ENCODE measurements at regions of chr1 and their contacts with region 1.

Region 1: DNA sequence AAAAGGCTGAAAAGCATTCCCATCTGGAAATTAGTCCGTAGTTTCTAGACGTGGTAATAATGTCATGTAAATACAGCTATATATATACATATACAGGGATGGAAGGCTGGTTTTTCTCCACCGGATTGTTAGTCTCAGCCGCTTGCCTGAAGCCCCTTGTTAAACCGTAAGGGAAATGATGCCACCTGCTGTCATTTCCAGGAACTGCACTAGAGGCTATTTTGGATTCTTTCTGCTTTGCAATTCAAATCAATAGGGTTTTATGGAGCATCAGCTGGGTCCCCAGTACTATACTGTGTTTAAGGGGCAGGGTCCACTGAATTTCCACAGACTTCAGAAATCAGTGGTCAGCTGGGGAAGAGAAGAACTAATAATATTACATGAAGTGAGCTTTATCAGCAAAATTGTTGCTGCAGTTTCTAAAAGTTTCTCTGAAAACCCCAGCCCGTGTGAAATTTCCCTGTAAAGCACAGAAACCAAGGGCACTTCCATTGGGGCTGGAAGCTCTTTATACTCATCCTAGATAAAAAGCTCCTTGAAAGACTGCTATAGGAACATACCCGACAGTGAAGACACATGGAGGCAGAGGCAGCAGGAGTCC is 33.8 kb upstream of the MPZL1 start:
- DNase-seq: no peak
- ATAC-seq: peak; percentile 78
- H3K4me3 ChIP-seq: no peak overlapping the region
- H3K27ac ChIP-seq: no peak overlapping the region
- H3K4me1 ChIP-seq: peaks cover 7% of the 10 kb centered on the region
- H3K27me3 ChIP-seq: no peaks in the 10 kb centered on the region
- CTCF ChIP-seq: peak; percentile 94

Region 2: DNA sequence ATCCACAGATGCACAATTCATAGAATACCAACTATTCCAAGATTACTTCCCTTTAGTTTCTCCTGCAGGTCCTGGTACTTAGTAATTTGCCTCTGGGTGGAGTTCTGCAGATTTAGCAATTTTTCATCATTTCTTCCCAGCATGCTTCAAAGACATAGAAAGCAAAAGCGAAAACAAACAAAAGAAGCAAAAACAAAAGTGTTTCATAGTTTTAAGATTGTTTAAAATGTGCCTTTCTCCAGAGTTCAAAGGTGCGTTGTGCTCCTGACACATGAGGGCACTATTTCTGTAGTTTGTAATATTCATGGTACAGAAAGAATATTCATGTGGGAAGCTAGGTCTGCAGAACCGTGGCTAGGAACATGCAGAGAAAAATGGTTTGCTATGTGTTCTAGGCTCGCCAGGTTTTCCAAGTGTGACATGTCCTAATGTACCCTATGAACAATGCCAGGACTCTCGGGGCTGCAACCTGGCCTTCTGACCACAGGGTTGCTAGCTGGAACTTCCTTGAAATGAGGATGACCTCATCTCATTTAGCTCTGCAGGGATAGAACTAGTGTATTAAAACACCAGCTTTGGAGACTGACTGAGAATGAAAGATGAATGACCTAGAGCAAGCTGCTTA is 88.0 kb before region 1 on chr1:
- intact Hi-C with region 1: loop called (anchors 5 kb)
- DNase-seq: no peak
- ATAC-seq: peak; percentile 81
- H3K4me3 ChIP-seq: no peak overlapping the region
- H3K27ac ChIP-seq: no peak overlapping the region
- H3K4me1 ChIP-seq: peaks cover 26% of the 10 kb centered on the region
- H3K27me3 ChIP-seq: no peaks in the 10 kb centered on the region
- CTCF ChIP-seq: peak; percentile 62

Measured in upper lobe of right lung (tissue), 1 donor.